Transverse colon (tissue), 4 donors: ENCODE measurements at regions of chr7 and their contacts with region 1.

Region 1: DNA sequence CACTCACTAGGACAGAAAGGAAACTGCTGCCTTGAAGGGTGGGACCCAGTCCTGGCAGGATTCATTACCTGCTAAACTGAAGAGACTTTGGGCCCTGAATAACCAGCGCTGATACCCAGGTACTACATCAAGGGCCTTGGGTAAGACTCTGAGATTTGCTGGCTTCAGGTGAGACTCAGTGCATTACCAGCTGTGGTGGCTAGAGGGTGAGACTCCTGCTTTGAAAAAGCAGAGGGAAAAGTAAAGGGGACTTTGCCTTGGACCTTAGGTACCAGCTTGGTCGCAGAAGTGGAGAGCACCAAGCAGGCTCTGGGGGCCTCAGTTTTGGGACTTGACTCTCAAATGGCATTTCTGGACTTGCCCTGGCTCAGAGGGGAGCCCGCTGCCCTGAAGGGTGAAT is 673.3 kb downstream of the NXPH1 start:
- DNase-seq: no peak
- H3K4me3 ChIP-seq: no peak overlapping the region
- H3K27ac ChIP-seq: no peak overlapping the region
- H3K4me1 ChIP-seq: no peaks in the 10 kb centered on the region
- H3K27me3 ChIP-seq: no peaks in the 10 kb centered on the region
- CTCF ChIP-seq: no peak
- EP300 ChIP-seq: no peak
- POLR2A ChIP-seq: no peak

Region 2: GRCh38 chr7:8923164-8923806 is 183.5 kb before region 1 on chr7:
- in situ Hi-C with region 1: no loop called
- intact Hi-C with region 1: no loop called
- DNase-seq: no peak
- H3K4me3 ChIP-seq: no peak overlapping the region
- H3K27ac ChIP-seq: no peak overlapping the region
- H3K4me1 ChIP-seq: no peaks in the 10 kb centered on the region
- H3K27me3 ChIP-seq: no peaks in the 10 kb centered on the region
- CTCF ChIP-seq: no peak
- EP300 ChIP-seq: no peak
- POLR2A ChIP-seq: no peak

Region 3: GRCh38 chr7:9029671-9030530 is 76.8 kb before region 1 on chr7:
- in situ Hi-C with region 1: no loop called
- intact Hi-C with region 1: loop called (anchors 2 kb)
- DNase-seq: no peak
- H3K4me3 ChIP-seq: no peak overlapping the region
- H3K27ac ChIP-seq: no peak overlapping the region
- H3K4me1 ChIP-seq: no peaks in the 10 kb centered on the region
- H3K27me3 ChIP-seq: no peaks in the 10 kb centered on the region
- CTCF ChIP-seq: no peak
- EP300 ChIP-seq: no peak
- POLR2A ChIP-seq: no peak